Psoas muscle (tissue), 8 donors: ENCODE measurements at regions of chr21 and their contacts with region 1.

Region 1: GRCh38 chr21:45554477-45555175 is 12.4 kb upstream of the SLC19A1 start:
- DNase-seq: peak; percentile 81 to 91
- ATAC-seq: peak; percentile 66 to 82 (median 76)
- H3K4me3 ChIP-seq: peak overlapping the region; percentile 67
- H3K27ac ChIP-seq: no peak overlapping the region
- H3K4me1 ChIP-seq: peaks cover 4% of the 10 kb centered on the region
- H3K27me3 ChIP-seq: peaks cover 0 to 24% (median 9%) of the 10 kb centered on the region in 3 donors
- CTCF ChIP-seq: peak; percentile 78

Region 2: GRCh38 chr21:45596704-45597318 is 42.2 kb after region 1 on chr21:
- intact Hi-C with region 1: loop called in 1 of 2 experiments (anchors 1 kb)
- DNase-seq: peak; percentile 69 to 75
- ATAC-seq: peak in 3 of 4 donors; percentile 63 to 76 (median 68)
- H3K4me3 ChIP-seq: no peak overlapping the region
- H3K27ac ChIP-seq: no peak overlapping the region
- H3K4me1 ChIP-seq: no peaks in the 10 kb centered on the region
- H3K27me3 ChIP-seq: peaks cover 0 to 34% (median 9%) of the 10 kb centered on the region in 3 donors
- CTCF ChIP-seq: peak; percentile 56

Region 3: GRCh38 chr21:45607021-45607908 is 52.6 kb after region 1 on chr21:
- intact Hi-C with region 1: no loop called
- DNase-seq: no peak
- ATAC-seq: no peak
- H3K4me3 ChIP-seq: no peak overlapping the region
- H3K27ac ChIP-seq: no peak overlapping the region
- H3K4me1 ChIP-seq: no peaks in the 10 kb centered on the region
- H3K27me3 ChIP-seq: peaks cover 0 to 37% (median 3%) of the 10 kb centered on the region in 3 donors
- CTCF ChIP-seq: no peak

Region 4: DNA sequence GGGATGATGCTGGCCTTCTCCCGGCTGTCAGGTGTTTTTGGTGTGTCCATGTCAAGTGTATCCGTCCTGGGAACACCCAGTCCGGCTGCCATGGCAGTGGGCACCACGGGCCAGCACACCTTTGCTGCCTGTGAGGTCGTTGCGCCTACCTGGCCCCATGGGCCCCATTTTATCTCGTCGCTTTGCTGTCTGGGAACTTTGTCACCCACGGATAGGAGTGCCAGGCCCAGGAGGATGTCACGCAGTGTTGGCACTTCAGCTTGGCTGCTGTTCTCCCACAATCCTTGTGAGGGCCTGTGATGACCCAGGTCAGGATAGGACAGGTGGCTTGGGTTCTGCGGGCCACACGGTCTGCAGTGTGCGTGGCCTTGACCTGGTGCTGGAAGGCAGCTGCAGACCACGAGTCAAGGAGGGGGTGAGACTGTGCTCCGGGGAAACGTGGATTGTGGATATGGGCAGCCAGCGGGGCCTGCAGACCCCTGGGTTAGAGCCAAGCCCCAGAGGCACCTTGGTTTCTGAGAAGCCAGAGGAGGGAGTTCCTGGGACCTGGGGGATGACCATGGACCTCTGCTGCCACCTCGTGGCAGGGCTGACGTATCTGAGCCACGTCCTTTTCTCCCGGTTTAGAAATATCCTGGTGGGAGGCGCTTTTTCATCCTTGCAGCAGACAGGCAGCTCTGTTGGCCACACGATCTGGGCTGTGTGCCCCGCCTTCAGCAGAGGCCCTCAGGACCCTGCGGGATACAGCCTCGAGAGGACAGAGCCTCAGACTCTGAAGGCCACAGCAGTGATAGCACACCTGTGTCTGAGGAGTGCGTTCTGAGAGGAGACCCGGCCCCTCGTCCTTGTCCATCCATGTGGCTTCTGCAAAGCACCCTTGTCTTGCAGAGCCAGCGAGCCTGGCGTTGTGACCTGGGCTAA is 265.8 kb after region 1 on chr21:
- intact Hi-C with region 1: loop called (anchors 1 to 5 kb)
- DNase-seq: peak; percentile 71 to 84
- ATAC-seq: peak; percentile 72 to 85 (median 78)
- H3K4me3 ChIP-seq: no peak overlapping the region
- H3K27ac ChIP-seq: no peak overlapping the region
- H3K4me1 ChIP-seq: no peaks in the 10 kb centered on the region
- H3K27me3 ChIP-seq: peaks cover 0 to 33% (median 7%) of the 10 kb centered on the region in 3 donors
- CTCF ChIP-seq: peak; percentile 78

Region 5: GRCh38 chr21:45923146-45923545 is 368.5 kb after region 1 on chr21:
- intact Hi-C with region 1: loop called in 1 of 2 experiments (anchors 5 kb)
- DNase-seq: peak; percentile 70 to 82
- ATAC-seq: peak; percentile 51 to 68 (median 58)
- H3K4me3 ChIP-seq: no peak overlapping the region
- H3K27ac ChIP-seq: no peak overlapping the region
- H3K4me1 ChIP-seq: no peaks in the 10 kb centered on the region
- H3K27me3 ChIP-seq: peaks cover 0 to 28% (median under 1%) of the 10 kb centered on the region in 3 donors
- CTCF ChIP-seq: peak; percentile 59